Left cardiac atrium (tissue), 4 donors: ENCODE measurements at regions of chr1 and their contacts with region 1.

Region 1: DNA sequence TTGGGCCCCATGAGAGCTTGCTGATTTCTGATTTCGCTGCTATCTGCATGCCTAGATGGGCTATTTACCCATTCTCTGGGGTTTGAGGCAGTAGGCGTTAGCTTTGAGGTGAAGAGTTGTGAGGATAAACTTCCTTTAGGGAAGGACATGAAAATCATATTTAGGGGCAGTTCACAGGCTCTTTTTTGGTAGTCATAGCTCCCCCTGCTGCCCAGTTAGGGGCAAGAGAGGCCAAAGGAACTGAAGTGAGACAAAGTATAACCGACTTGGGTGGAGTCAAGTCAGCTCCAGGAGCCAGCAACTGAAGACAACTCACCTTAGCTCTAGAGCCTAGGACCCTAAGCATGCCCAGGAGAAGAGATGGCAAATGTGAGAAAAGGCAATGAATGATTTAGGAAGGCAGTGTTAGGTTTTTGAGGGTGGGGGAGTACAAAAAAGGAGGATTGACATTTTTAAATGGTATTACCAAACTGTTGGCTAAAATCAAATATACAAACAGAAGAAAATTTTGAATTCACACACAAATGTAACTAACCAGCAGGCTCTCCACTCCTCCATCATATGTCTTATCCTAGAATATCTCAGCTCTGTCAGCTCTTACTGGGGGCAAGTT is 625.2 kb downstream of the LMO4 start:
- DNase-seq: peak; percentile 65
- ATAC-seq: peak; percentile 67 to 82

Region 2: GRCh38 chr1:87131809-87132283 is 822.0 kb before region 1 on chr1:
- intact Hi-C with region 1: loop called in 1 of 2 experiments (anchors 5 kb)
- DNase-seq: peak; percentile 85
- ATAC-seq: peak; percentile 90

Region 3: DNA sequence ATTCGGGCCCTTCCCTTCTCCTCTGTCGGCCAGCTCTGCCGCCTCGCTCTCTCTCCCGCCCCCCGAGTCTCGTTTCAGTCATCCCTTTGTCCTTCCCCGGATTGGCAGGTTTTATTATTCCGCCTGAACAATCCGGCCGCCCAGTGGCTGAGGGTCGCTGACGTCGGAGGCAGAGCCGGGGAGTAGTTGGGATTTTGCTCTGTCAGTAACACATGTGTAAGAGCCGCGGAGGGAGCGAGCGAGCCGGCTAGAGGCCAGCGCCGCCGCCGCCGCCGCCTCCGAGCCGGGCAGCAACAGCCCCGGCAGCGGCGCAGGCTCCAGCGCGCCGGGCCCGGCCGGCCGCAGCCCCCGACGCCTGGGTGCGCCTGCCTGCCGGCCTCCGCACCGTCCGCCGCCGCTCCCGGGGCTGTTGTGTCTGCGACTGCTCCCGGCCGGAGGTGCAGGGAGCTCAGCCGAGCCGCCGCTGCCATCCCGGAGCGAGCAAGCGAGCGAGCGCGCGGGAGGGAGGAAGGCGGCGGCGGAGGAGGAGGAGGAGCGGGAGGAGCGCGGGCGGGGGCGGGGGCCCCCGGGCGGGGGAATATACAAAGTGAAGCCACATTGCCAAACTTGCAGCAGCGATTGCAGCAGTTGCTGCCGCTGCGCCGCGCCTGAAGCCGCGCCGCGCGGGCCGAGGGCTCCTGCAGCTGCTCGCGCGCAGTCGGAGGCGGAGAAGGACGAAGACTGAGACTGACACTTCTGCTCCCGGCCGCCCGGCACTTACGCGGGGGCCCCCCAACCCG is 625.4 kb before region 1 on chr1 and contains the start of gene LMO4:
- intact Hi-C with region 1: loop called (anchors 2 to 10 kb)
- DNase-seq: peak; percentile 97
- ATAC-seq: peak; percentile 85
- total RNA-seq, gene LMO4: 43.2 to 50.6 TPM